ENCODE measurements at regions of chr2 and their contacts with region 1.

Region 1: GRCh38 chr2:171703574-171704347 is 16.5 kb downstream of the DYNC1I2 start:
- DNase-seq: peak; percentile 27
- ATAC-seq: no peak
- H3K4me3 Mint-ChIP-seq: no peak overlapping the region
- H3K27ac Mint-ChIP-seq: no peak overlapping the region
- H3K4me1 Mint-ChIP-seq: peaks cover 1% of the 10 kb centered on the region
- H3K27me3 Mint-ChIP-seq: no peaks in the 10 kb centered on the region

Region 2: DNA sequence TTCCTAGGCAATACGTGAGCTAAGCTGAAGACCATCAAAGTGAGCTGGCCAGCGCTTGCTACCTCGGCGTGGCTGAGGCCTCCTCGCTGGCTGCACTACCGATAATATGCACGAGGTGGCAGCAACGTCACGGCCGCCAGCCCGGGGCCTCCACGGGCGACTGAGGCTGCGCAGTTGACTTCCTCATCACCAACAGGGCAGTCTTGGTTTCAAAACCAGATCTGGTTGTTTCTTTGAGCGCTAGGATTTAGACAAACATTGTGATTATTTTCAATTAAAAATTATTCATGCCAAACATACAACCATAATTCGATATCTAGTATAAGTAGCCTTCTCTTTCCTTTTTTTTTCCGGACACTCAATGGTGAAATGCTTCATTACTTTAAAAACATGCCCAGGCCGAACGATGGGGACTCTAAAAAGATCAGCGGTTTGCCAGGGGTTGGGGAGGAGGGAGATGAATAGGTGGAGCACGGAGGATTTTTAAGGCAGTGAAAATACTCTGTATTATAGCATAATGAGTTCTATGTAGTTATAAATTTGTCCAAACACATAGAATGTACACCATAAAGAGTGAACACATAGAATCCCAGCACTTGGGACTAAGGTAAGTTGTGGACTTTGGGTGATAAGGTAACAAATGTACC is 129.5 kb before region 1 on chr2:
- CTCF ChIA-PET with region 1: interaction called, 14 read pairs
- POLR2A ChIA-PET with region 1: no interaction called
- DNase-seq: peak; percentile 85
- ATAC-seq: peak; percentile 98
- H3K4me3 Mint-ChIP-seq: no peak overlapping the region
- H3K27ac Mint-ChIP-seq: no peak overlapping the region
- H3K4me1 Mint-ChIP-seq: peaks cover 8% of the 10 kb centered on the region
- H3K27me3 Mint-ChIP-seq: peaks cover 5% of the 10 kb centered on the region

Region 3: DNA sequence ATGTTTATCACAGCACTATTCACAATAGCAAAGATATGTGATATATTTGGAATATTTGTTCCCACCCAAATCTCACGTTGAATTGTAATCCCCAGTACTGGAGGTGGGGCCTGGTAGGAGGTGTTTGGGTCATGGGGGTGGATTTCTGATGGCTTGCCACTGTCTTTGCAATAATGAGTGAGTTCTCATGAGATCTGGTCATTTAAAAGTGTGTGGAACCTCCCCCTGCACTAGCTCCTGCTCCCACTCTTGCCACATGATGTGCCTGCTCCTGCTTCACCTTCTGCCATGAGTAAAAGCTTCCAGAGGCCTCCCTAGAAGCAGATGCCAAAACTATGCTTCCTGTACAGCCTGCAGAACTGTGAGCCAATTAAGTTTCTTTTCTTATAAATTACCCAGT is 88.7 kb before region 1 on chr2:
- CTCF ChIA-PET with region 1: no interaction called
- POLR2A ChIA-PET with region 1: no interaction called
- DNase-seq: no peak
- ATAC-seq: no peak
- H3K4me3 Mint-ChIP-seq: no peak overlapping the region
- H3K27ac Mint-ChIP-seq: no peak overlapping the region
- H3K4me1 Mint-ChIP-seq: no peaks in the 10 kb centered on the region
- H3K27me3 Mint-ChIP-seq: peaks cover 9% of the 10 kb centered on the region

Region 4: GRCh38 chr2:171687287-171688128 is 16.3 kb before region 1 on chr2 and contains the start of gene DYNC1I2:
- CTCF ChIA-PET with region 1: interaction called, 25 read pairs
- POLR2A ChIA-PET with region 1: no interaction called
- DNase-seq: peak; percentile 79
- ATAC-seq: peak; percentile 77
- H3K4me3 Mint-ChIP-seq: peak within 1 kb of the TSS; percentile 84
- H3K27ac Mint-ChIP-seq: peak within 1 kb of the TSS; percentile 67
- H3K4me1 Mint-ChIP-seq: peaks cover 19% of the 10 kb centered on the region
- H3K27me3 Mint-ChIP-seq: peaks cover 12% of the 10 kb centered on the region
- total RNA-seq, gene DYNC1I2: 46.0 to 47.7 TPM

Region 5: GRCh38 chr2:172113617-172114016 is 409.9 kb after region 1 on chr2:
- CTCF ChIA-PET with region 1: interaction called, 143 read pairs
- POLR2A ChIA-PET with region 1: no interaction called
- DNase-seq: no peak
- ATAC-seq: no peak
- H3K4me3 Mint-ChIP-seq: no peak overlapping the region
- H3K27ac Mint-ChIP-seq: no peak overlapping the region
- H3K4me1 Mint-ChIP-seq: no peaks in the 10 kb centered on the region
- H3K27me3 Mint-ChIP-seq: peaks cover 37% of the 10 kb centered on the region

Region 6: GRCh38 chr2:172131713-172132555 is 428.2 kb after region 1 on chr2:
- CTCF ChIA-PET with region 1: interaction called, 15 read pairs
- POLR2A ChIA-PET with region 1: no interaction called
- DNase-seq: no peak
- ATAC-seq: no peak
- H3K4me3 Mint-ChIP-seq: no peak overlapping the region
- H3K27ac Mint-ChIP-seq: no peak overlapping the region
- H3K4me1 Mint-ChIP-seq: no peaks in the 10 kb centered on the region
- H3K27me3 Mint-ChIP-seq: peaks cover 18% of the 10 kb centered on the region

Measured in activated CD8-positive, alpha-beta T cell treated with anti-CD3 and anti-CD28 coated beads, Interleukin-2, amount 10 ng/mL, durations not matched to agents 7 days and 5 days (primary cell).